Ovary (tissue), 10 donors: ENCODE measurements at regions of chr7 and their contacts with region 1.

Region 1: GRCh38 chr7:34585047-34585446 is 73.0 kb upstream of the NPSR1 start:
- DNase-seq: no peak
- H3K4me3 ChIP-seq: no peak overlapping the region
- H3K27ac ChIP-seq: no peak overlapping the region
- H3K4me1 ChIP-seq: no peaks in the 10 kb centered on the region
- H3K27me3 ChIP-seq: no peaks in the 10 kb centered on the region
- CTCF ChIP-seq: no peak
- EP300 ChIP-seq: no peak
- POLR2A ChIP-seq: no peak

Region 2: GRCh38 chr7:34497141-34497777 is 87.8 kb before region 1 on chr7:
- intact Hi-C with region 1: no loop called
- DNase-seq: no peak
- H3K4me3 ChIP-seq: no peak overlapping the region
- H3K27ac ChIP-seq: no peak overlapping the region
- H3K4me1 ChIP-seq: no peaks in the 10 kb centered on the region
- H3K27me3 ChIP-seq: no peaks in the 10 kb centered on the region
- CTCF ChIP-seq: no peak
- EP300 ChIP-seq: no peak
- POLR2A ChIP-seq: no peak

Region 3: GRCh38 chr7:34772296-34772938 is 187.4 kb after region 1 on chr7:
- intact Hi-C with region 1: no loop called
- DNase-seq: no peak
- H3K4me3 ChIP-seq: no peak overlapping the region
- H3K27ac ChIP-seq: no peak overlapping the region
- H3K4me1 ChIP-seq: no peaks in the 10 kb centered on the region
- H3K27me3 ChIP-seq: no peaks in the 10 kb centered on the region
- CTCF ChIP-seq: no peak
- EP300 ChIP-seq: no peak
- POLR2A ChIP-seq: no peak

Region 4: DNA sequence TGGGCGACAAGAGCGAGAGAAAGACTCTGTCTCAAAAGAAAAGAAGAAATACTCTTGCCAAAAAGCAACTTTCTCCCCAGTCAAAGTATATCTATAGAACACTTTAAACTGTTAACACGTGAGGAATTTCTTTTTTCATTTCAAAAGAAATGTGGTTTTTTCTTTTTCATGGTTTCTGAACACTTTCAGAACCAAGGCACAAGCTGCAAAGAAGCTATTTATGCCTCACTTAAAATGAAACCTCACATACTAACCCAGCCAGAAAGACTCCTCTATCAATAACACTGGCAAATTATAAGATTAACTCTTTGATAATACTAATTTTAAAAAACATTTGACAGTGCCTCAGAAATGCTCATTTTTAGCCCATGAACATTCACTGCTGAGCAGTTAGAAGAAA is 647.9 kb after region 1 on chr7:
- intact Hi-C with region 1: loop called in 1 of 4 experiments (anchors 5 kb)
- DNase-seq: no peak
- H3K4me3 ChIP-seq: no peak overlapping the region
- H3K27ac ChIP-seq: no peak overlapping the region
- H3K4me1 ChIP-seq: no peaks in the 10 kb centered on the region
- H3K27me3 ChIP-seq: no peaks in the 10 kb centered on the region
- CTCF ChIP-seq: no peak
- EP300 ChIP-seq: no peak
- POLR2A ChIP-seq: no peak